ENCODE measurements at regions of chr7 and their contacts with region 1.

Region 1: GRCh38 chr7:128168667-128169210 is 72.3 kb upstream of the LEP start:
- DNase-seq: peak; percentile 79

Region 2: DNA sequence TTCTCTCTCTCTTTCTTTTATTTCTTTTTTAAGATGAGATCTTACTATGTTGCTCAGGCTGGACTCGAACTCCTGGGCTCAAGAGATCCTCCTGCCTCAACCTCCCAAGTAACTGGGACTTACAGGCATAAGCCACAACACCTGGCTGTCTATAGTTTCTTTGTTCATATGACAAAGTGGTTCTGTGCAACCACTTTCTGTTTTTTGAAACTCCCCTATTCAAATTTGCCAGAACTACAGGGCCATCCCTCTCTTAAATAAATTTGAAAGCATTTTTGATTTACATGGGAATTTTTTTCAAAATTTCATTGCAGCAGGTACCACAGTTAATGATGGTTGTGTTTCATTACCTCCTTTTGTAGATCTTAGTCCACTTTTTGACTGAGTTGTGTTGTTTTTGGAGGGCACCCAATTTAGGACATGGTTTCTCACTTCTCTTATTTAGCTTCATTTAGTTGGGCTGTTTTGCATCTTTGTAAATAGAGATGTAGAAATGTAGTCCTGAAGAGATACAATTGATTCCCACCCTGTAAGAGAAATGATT is 256.7 kb before region 1 on chr7:
- intact Hi-C with region 1: loop called in 1 of 2 experiments (anchors 2 kb)
- DNase-seq: no peak

Region 3: GRCh38 chr7:128266883-128267607 is 98.3 kb after region 1 on chr7:
- intact Hi-C with region 1: no loop called
- DNase-seq: peak; percentile 85